Heart right ventricle (tissue), 16 donors: ENCODE measurements at regions of chr1 and their contacts with region 1.

Region 1: GRCh38 chr1:65836686-65837085 is 44.0 kb downstream of the PDE4B start:
- DNase-seq: no peak
- ATAC-seq: no peak
- H3K4me3 ChIP-seq: no peak overlapping the region
- H3K27ac ChIP-seq: no peak overlapping the region
- H3K4me1 ChIP-seq: no peaks in the 10 kb centered on the region
- H3K27me3 ChIP-seq: no peaks in the 10 kb centered on the region
- CTCF ChIP-seq: no peak

Region 2: DNA sequence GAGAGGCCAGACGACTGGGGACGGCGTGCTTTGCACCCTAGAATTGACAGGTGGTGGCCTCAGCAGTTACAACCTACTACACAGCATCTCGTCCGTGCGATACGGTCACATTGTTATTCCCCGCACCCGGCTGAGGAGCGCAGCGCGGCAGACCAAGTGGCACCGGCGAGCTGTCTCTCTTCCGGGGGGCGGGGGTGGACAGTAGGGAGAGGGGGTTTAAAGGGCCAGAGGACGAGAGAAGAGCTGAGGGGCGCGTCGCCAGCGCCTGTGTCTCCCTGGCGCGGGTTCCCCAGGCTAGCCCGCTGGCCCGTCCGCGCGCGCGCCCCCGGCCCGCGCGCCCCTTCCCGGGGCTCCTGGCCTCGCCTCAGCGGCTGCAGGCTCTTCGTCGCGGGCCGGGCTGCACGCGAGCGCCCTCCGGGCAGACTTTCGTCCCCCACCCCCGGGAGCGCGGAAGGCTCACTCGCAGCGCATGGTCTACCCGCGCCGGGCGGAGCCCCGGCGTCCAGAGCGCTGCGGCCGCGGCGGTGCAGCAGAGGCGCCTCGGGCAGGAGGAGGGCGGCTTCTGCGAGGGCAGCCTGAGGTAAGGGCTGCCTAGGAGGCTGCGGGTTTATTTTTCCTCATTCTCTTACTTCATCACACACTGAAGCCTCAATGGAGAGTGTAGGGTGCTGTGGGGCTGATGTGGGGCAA is 43.9 kb before region 1 on chr1 and contains the start of gene PDE4B:
- intact Hi-C with region 1: loop called in 1 of 10 experiments (anchors 1 kb)
- DNase-seq: peak in 1 of 2 donors; percentile 17
- ATAC-seq: peak in 2 of 8 donors; percentile 22 to 57
- H3K4me3 ChIP-seq: peak within 1 kb of the TSS in 9 of 10 donors; percentile 7 to 51 (median 30)
- H3K27ac ChIP-seq: peak within 1 kb of the TSS in 1 of 10 donors; percentile 50
- H3K4me1 ChIP-seq: peaks cover 0 to 14% (median 0%) of the 10 kb centered on the region in 9 donors
- H3K27me3 ChIP-seq: peaks cover 0 to 60% (median 47%) of the 10 kb centered on the region in 7 donors
- CTCF ChIP-seq: no peak
- total RNA-seq, gene PDE4B: 6.3 to 63.2 (median 17.9) TPM